ENCODE measurements at regions of chr9 and their contacts with region 1.

Region 1: GRCh38 chr9:99660191-99660708 is 161.4 kb upstream of the NR4A3 start:
- H3K4me3 Mint-ChIP-seq: peak overlapping the region; percentile 42
- H3K27ac Mint-ChIP-seq: peak overlapping the region; percentile 78
- H3K4me1 Mint-ChIP-seq: peaks cover 30% of the 10 kb centered on the region
- H3K27me3 Mint-ChIP-seq: no peaks in the 10 kb centered on the region

Region 2: DNA sequence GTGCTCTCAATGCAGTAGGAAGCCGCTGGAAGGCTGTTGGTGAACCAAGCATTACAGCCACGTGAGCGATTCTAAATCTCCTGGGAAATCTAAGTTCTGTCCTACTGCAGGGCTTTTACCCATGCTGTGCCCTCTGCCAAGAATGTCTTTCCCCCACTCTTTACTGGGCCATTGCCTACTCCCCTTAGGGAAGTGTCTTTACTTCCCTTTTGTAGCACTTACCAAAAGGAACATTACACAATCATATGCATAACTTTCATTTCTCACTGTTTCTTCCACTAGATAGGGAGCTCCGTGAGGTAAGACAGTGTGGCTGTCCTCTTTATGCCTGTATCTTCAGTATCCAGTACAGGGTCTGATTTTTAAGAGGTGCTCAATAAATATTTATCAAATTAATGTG is 80.3 kb before region 1 on chr9:
- intact Hi-C with region 1: loop called (anchors 1 kb)
- H3K4me3 Mint-ChIP-seq: no peak overlapping the region
- H3K27ac Mint-ChIP-seq: peak overlapping the region; percentile 10
- H3K4me1 Mint-ChIP-seq: peaks cover 56% of the 10 kb centered on the region
- H3K27me3 Mint-ChIP-seq: no peaks in the 10 kb centered on the region

Region 3: GRCh38 chr9:99634186-99634585 is 26.1 kb before region 1 on chr9:
- intact Hi-C with region 1: loop called (anchors 1 kb)
- H3K4me3 Mint-ChIP-seq: no peak overlapping the region
- H3K27ac Mint-ChIP-seq: peak overlapping the region; percentile 79
- H3K4me1 Mint-ChIP-seq: peaks cover 29% of the 10 kb centered on the region
- H3K27me3 Mint-ChIP-seq: no peaks in the 10 kb centered on the region

Region 4: DNA sequence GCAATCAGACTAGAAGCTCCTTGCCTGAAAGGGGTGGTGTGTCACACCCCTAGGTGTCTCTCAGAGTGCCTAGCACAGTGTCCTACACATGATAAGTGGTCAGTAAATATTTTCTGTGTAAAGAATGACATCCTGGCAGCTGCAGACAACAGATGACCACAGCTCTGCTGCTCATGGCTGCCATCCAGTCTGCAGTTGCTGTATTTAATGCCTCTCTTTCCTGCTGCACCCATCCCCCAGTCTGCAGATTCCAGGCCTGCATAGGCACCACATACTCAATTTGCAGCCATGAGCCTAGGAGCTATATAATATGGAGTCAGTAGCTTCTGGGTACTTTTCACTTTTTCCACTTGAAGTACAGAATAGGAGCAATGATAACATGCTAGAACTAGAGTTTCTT is 66.5 kb after region 1 on chr9:
- intact Hi-C with region 1: no loop called
- H3K4me3 Mint-ChIP-seq: no peak overlapping the region
- H3K27ac Mint-ChIP-seq: no peak overlapping the region
- H3K4me1 Mint-ChIP-seq: peaks cover 5% of the 10 kb centered on the region
- H3K27me3 Mint-ChIP-seq: no peaks in the 10 kb centered on the region

Measured in dendritic cell treated with granulocyte-macrophage colony-stimulating factor and Interleukin-4, amounts not matched to agents 40 ng/mL and 50 ng/mL, for 4 days (primary cell).